ENCODE measurements at regions of chr20 and their contacts with region 1.

Region 1: DNA sequence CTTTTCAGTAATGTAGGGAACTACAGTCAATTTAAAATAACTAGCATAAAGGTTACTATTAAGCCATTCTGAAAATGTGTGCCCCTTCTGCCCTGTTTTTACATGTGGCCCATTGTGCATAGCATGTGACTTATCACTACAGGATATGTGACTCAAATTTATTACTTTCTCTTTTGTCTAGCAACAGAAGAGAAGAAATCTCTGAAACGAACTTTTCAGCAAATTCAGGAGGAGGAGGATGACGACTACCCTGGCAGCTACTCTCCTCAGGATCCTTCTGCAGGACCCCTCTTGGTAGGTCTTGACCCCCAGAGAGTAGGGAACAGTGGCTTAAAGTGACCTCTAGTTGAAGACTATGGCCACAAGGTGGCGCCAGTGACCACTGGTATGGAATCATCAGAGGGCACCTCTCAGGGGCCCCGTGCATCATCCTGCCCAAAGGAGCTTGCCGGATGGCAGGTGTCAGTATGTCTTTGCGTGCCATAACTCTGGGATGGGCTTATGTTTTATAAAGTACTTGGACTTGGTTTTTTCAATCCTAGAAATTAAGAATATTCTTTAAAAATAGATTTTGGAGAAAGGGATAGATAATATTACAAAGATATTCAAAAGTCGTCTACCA is 23.9 kb downstream of the RPRD1B start:
- DNase-seq: peak; percentile 80
- H3K4me3 ChIP-seq: no peak overlapping the region; a peak in 1 of 4 replicates
- H3K27ac ChIP-seq: peak overlapping the region in 1 of 2 experiments; percentile 22; a peak in 2 of 4 replicates
- H3K4me1 ChIP-seq: no peaks in the 10 kb centered on the region; a peak in 1 of 4 replicates
- H3K27me3 ChIP-seq: no peaks in the 10 kb centered on the region
- CTCF ChIP-seq: peak; percentile 95
- EP300 ChIP-seq: no peak
- RAD21 ChIP-seq: peak; percentile 94

Region 2: DNA sequence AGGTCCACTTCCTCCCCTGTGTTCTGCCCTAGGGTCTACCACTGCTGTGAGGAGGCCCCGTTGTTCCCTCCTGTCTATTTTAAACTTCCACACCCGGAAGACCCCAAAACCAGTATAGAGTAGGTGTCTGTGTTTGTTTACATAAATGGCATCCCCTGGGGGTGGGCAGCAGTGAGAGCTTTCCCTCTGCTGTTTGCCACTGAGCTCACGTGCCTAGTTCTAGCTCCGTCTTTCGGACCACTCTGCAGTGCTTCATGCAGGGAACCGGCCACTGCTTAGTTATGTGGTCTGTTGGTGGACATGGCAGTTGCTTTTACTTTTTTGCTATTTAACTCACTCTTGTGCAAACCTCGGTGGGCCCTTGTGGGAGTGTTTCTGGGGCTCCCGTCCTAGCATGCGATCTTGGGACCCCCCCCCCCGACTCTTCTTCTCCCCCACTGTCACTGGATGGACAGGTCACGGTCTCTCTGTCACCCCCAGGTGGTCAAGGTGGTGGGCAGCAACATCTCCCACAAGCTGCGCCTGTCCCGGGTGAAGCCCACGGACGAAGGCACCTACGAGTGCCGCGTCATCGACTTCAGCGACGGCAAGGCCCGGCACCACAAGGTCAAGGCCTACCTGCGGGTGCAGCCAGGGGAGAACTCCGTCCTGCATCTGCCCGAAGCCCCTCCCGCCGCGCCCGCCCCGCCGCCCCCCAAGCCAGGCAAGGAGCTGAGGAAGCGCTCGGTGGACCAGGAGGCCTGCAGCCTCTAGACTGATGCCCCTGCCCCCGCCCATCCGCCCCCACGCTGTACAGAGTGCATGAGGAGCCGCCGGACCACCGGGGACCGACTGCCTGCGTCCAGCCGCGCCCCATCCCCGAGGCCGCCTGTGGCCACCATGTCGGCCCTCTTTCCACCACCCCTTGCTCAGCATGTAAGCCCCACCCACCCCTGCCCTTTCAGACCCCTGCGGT is 113.7 kb before region 1 on chr20:
- CTCF ChIA-PET with region 1: no interaction called
- POLR2A ChIA-PET with region 1: no interaction called
- DNase-seq: peak; percentile 66
- H3K4me3 ChIP-seq: no peak overlapping the region
- H3K27ac ChIP-seq: no peak overlapping the region
- H3K4me1 ChIP-seq: no peaks in the 10 kb centered on the region
- H3K27me3 ChIP-seq: no peaks in the 10 kb centered on the region
- CTCF ChIP-seq: no peak; the same call in 1 of the 2 replicates
- EP300 ChIP-seq: no peak
- RAD21 ChIP-seq: 0 out of 2 replicates have a peak, but pooled peaks have one; percentile 5

Region 3: DNA sequence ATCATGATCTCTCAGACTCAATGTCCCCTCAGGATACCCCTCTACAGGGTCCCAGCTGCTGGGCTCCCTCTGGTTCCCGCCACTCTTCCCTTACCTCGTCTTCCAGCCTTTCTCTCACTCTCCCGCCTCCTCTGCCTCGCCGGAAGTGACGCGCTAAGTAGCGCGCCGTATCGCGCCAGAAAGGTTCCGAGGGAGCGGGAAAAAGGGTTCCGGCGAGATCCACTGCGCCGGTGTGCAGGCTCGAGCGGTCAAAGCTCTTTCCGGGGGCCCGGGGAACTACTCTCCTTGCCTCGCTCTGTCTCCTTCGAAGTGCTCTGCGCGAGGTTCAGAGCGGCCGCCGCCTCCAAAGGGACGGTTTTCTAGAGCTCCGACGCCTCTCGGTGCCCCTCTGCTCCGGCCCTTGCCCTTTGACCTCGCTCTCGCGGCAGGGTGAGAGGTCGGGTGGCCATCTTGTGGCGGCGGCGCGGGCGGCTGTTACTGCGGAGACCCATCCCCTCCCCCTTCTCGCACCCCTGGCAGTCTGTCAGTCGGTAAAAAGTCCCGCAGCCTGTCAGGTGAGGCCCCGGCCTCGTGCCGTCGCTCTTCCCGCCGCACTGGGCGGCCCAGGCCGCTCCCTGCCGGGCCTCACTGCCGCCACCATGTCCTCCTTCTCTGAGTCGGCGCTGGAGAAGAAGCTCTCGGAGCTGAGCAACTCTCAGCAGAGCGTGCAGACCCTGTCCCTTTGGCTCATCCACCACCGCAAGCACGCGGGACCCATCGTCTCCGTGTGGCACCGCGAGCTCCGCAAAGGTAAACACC is 24.0 kb before region 1 on chr20 and contains the starts of genes RPRD1B and TTI1:
- CTCF ChIA-PET with region 1: interaction called, 13 read pairs
- POLR2A ChIA-PET with region 1: no interaction called
- DNase-seq: peak; percentile 90
- H3K4me3 ChIP-seq: peak within 1 kb of the TSS; percentile 83 to 99
- H3K27ac ChIP-seq: peak within 1 kb of the TSS; percentile 82 to 91
- H3K4me1 ChIP-seq: peaks cover 8 to 25% of the 10 kb centered on the region in 2 experiments; a peak in 3 of 4 replicates
- H3K27me3 ChIP-seq: no peaks in the 10 kb centered on the region
- CTCF ChIP-seq: no peak
- EP300 ChIP-seq: no peak
- RAD21 ChIP-seq: no peak
- polyA plus RNA-seq, gene RPRD1B: 11.8 and 13.3 TPM in 2 replicates
- polyA plus RNA-seq, gene TTI1: 14.7 and 15.6 TPM in 2 replicates

Region 4: GRCh38 chr20:38073307-38074071 is 16.0 kb after region 1 on chr20:
- CTCF ChIA-PET with region 1: interaction called, 54 read pairs
- POLR2A ChIA-PET with region 1: no interaction called
- DNase-seq: peak; percentile 52
- H3K4me3 ChIP-seq: no peak overlapping the region; a peak in 1 of 4 replicates
- H3K27ac ChIP-seq: peak overlapping the region; percentile 36 to 78
- H3K4me1 ChIP-seq: peaks cover 10 to 22% of the 10 kb centered on the region in 2 experiments; a peak in 3 of 4 replicates
- H3K27me3 ChIP-seq: no peaks in the 10 kb centered on the region
- CTCF ChIP-seq: peak; percentile 81
- EP300 ChIP-seq: no peak
- RAD21 ChIP-seq: peak; percentile 70

Region 5: DNA sequence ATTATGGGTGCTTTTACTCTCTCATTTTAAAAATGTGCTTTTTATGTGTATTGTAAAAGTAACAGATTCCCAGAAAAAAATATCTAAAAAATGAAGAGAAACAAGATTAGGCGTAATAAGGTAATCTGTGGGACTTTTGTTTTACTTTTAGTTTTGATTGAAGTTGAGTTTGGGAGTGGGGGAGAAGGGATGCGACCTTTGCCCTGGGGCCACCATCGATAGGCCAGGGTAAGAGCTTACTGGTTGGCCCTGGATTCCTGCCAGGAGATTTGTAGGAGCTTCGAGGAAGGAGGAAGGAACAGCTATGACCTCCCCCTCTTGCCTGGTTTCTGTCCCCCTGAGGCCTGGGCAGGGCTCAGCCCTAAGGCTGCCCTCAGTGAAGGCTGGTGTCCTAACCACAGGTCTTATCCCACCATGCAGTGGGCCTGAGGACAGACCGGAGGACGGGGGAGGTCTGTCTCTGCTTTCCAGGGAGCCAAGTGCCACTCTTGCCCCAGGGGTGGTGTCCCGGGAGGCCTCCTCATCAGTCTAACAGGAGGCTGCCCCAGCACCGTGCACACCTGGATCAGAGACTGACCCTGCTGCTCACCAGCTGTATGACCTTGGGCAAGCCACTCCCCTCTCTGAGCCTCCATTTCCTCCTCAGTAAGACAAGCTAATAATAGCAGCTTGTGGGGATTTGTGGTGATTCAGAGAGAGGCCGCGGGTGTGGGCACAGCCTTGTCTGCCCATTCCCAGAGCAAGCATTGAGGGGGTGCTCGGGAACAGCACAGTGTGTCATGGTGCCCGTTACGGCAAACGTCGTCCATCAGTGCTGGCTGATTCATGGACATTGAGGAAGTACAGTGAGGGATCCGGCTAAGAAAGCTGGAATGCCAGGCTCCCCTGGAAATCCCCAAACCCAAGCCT is 86.4 kb after region 1 on chr20:
- CTCF ChIA-PET with region 1: interaction called, 10 read pairs
- POLR2A ChIA-PET with region 1: no interaction called
- DNase-seq: peak; percentile 46
- H3K4me3 ChIP-seq: no peak overlapping the region
- H3K27ac ChIP-seq: peak overlapping the region; percentile 66 to 98
- H3K4me1 ChIP-seq: peaks cover 18 to 43% of the 10 kb centered on the region in 2 experiments
- H3K27me3 ChIP-seq: no peaks in the 10 kb centered on the region
- CTCF ChIP-seq: no peak
- EP300 ChIP-seq: peak in 1 of 2 experiments; percentile 83; a peak in 2 of 4 replicates
- RAD21 ChIP-seq: no peak

Region 6: DNA sequence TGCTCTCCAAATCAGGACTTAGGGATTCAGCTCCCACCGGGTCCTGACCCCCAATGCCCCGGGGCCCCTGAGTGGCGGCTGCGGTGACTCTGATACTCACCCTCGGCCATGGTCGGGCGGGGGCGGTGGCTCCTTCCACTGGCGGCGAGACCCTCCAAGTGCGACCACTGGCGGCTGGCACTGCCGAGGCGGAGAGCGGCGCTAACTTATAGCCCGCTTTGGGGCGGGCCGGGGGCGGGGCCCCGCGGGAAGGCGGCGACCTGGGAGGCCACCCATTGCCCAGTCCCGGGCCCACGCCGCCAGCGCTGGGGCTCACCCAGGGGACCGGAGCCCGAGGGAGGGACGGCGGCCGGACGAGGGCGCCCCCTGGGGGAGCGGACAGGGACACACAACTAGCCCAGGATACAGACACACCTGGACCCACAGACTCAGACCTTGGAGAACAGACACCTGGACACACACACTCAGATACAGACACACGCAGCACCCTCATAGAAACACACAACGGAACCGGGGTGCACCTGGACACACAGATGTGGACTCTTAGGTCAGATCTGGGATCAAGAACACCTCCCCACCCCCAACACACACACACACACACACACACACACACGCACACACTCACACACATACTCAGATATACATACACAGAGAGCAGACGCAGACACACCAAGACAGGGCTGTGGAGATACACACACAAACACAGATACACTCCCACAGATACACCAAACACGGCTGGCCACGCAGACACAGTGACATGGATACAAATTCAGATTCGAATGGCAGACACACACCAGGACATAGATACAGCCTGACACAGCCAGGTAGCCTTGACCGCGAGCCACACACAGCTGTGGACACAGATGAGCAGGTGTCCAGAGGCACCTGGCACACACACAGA is 107.9 kb after region 1 on chr20 and contains the start of gene TGM2:
- CTCF ChIA-PET with region 1: interaction called, 63 read pairs
- POLR2A ChIA-PET with region 1: interaction called, 3 read pairs
- DNase-seq: peak; percentile 92
- H3K4me3 ChIP-seq: peak within 1 kb of the TSS; percentile 58 to 77
- H3K27ac ChIP-seq: peak within 1 kb of the TSS in 1 of 2 experiments; percentile 58; a peak in 3 of 4 replicates
- H3K4me1 ChIP-seq: peaks cover 35 to 36% of the 10 kb centered on the region in 2 experiments; a peak in 3 of 4 replicates
- H3K27me3 ChIP-seq: no peaks in the 10 kb centered on the region
- CTCF ChIP-seq: peak; percentile 87
- EP300 ChIP-seq: no peak
- RAD21 ChIP-seq: peak; percentile 81
- polyA plus RNA-seq, gene TGM2: 548 and 676 TPM in 2 replicates

Region 7: DNA sequence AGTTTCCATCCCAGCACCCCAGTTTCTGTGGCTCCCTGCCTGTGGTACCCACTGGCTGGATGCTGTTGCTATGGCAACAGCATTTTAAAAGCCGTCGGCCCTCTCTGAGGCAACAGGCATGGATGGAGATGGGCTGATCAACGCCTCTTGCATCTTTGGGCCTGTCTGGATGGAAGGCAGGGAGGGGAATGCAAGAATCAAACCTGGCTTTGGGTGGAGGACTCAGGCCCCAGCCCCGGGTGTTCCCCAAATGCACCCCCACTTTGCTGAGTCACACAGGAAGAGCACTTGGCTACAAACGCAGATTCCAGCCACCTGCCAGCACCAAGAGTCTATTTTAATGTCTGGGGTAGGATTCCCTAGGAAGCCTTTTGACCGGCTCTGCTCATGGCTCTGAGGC is 153.3 kb after region 1 on chr20:
- CTCF ChIA-PET with region 1: interaction called, 725 read pairs
- POLR2A ChIA-PET with region 1: no interaction called
- DNase-seq: no peak
- H3K4me3 ChIP-seq: no peak overlapping the region
- H3K27ac ChIP-seq: peak overlapping the region in 1 of 2 experiments; percentile 18; a peak in 1 of 4 replicates
- H3K4me1 ChIP-seq: peaks cover 5 to 22% of the 10 kb centered on the region in 2 experiments; a peak in 3 of 4 replicates
- H3K27me3 ChIP-seq: no peaks in the 10 kb centered on the region
- CTCF ChIP-seq: no peak
- EP300 ChIP-seq: 0 out of 4 replicates have a peak, but pooled peaks of 1 of the 2 experiments have one; percentile 36
- RAD21 ChIP-seq: no peak

Region 8: DNA sequence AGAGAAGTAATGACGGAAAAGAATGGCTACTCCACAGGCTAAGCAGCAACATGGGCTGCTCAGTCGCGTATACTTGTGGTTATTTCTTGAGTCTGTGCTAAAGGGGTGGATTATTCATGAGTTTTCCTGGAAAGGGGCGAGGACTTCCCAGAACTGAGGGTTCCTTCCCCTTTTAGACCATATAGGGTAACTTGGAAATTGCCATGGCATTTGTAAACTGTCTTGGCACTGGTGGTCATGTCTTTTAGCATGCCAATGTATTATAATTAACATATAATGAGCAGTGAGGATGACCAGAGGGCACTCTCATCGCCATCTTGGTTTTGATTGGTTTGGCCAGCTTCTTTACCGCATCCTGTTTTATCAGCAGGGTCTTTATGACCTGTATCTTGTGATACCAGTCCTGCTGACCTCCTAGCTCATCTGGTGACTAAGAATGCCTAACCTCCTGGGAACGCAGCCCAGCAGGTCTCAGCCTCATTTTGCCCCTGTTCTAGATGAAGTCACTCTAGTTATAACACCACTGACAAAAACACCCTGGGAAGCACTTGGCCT is 300.3 kb after region 1 on chr20:
- CTCF ChIA-PET with region 1: no interaction called
- POLR2A ChIA-PET with region 1: no interaction called
- DNase-seq: no peak
- H3K4me3 ChIP-seq: no peak overlapping the region
- H3K27ac ChIP-seq: no peak overlapping the region
- H3K4me1 ChIP-seq: no peaks in the 10 kb centered on the region
- H3K27me3 ChIP-seq: no peaks in the 10 kb centered on the region
- CTCF ChIP-seq: no peak
- EP300 ChIP-seq: no peak
- RAD21 ChIP-seq: no peak